Activated T-helper 2 cell treated with anti-CD3 and anti-CD28 coated beads, Interferon-gamma antibody, Interleukin-2, Interleukin-4, amounts not matched to agents 10 μg/mL and 5 μg/mL and 100 μg/mL, durations not matched to agents 14 hours and 24 hours and 36 hours (primary cell): ENCODE measurements at regions of chr3 and their contacts with region 1.

Region 1: DNA sequence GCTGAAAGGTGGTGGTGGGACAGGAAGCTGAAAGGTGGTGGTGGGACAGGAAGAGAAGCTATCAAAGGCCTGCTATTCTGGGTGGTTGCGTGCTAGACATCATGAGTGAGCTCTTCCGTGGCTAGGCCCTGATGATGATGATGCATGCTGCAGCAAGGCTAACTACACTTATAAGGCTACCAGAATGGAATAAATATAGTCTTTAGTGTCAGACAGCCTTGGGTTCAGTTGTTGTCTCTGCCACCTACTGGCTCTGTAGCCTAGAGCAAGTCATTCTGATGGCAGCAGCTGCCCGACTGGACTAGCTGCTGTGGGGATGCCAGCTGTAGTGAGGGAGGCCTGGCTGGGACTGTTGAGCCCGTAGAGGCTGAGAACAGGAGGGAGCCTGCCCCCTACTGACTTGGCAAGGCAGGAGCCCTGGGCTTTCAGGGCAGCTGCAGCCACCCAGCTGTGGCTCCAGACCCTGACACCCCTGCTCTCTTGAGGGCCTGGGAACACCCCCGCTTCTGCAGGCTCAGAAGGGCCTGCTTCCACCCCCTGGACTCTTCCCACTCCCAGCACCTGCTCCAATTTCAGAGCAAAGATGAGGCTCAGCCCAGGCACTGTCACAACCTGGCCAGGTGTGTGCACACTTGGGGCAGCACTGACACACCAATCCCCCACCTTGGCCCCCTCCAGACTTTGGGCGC is 21.4 kb upstream of the ZBED2 start:
- DNase-seq: peak; percentile 51
- H3K4me3 Mint-ChIP-seq: peak overlapping the region; percentile 27
- H3K27ac Mint-ChIP-seq: peak overlapping the region; percentile 92
- H3K4me1 Mint-ChIP-seq: peaks cover 74% of the 10 kb centered on the region
- H3K27me3 Mint-ChIP-seq: no peaks in the 10 kb centered on the region

Region 2: DNA sequence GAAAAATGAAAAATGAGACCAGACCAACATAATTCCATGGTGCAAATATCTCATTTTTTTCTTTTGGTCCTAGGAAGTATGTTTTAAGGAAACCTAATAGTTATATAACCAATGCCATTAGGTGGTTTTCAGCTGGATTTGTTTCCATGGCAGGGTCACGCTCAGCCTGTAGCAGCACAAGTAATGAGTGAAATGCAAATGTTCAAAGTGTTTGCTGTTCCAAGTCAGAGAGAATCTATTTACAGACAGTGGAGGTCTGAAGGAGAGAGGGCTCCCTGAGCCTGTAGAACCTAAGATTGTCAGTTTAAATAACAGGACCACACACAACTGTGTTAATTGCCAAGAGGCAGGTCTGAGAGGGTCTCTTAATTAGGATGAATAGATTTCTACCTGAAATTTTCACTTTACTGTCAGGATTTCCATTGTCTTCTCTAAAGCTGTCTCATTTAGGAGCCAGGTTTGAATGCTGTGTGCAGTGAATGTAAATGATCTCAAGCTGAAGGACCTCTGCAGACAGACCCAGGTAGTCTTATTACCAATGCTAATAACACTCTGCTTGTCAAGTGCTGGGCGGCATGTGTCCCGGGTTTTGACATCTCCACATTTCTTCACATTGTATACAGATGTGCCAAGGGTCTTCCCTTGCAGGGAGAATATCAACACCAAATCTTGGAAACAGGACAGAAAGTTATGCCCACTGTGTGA is 862.2 kb before region 1 on chr3:
- intact Hi-C with region 1: no loop called
- DNase-seq: no peak
- H3K4me3 Mint-ChIP-seq: no peak overlapping the region
- H3K27ac Mint-ChIP-seq: no peak overlapping the region
- H3K4me1 Mint-ChIP-seq: no peaks in the 10 kb centered on the region
- H3K27me3 Mint-ChIP-seq: peaks cover 5% of the 10 kb centered on the region

Region 3: GRCh38 chr3:110814170-110815007 is 802.2 kb before region 1 on chr3:
- intact Hi-C with region 1: loop called (anchors 2 kb)
- DNase-seq: peak; percentile 35
- H3K4me3 Mint-ChIP-seq: peak overlapping the region; percentile 43
- H3K27ac Mint-ChIP-seq: peak overlapping the region; percentile 91
- H3K4me1 Mint-ChIP-seq: peaks cover 29% of the 10 kb centered on the region
- H3K27me3 Mint-ChIP-seq: peaks cover 26% of the 10 kb centered on the region

Region 4: GRCh38 chr3:111539351-111540331 is 76.9 kb before region 1 on chr3:
- intact Hi-C with region 1: loop called (anchors 1 kb)
- DNase-seq: peak; percentile 36
- H3K4me3 Mint-ChIP-seq: peak overlapping the region; percentile 69
- H3K27ac Mint-ChIP-seq: peak overlapping the region; percentile 85
- H3K4me1 Mint-ChIP-seq: peaks cover 66% of the 10 kb centered on the region
- H3K27me3 Mint-ChIP-seq: no peaks in the 10 kb centered on the region

Region 5: DNA sequence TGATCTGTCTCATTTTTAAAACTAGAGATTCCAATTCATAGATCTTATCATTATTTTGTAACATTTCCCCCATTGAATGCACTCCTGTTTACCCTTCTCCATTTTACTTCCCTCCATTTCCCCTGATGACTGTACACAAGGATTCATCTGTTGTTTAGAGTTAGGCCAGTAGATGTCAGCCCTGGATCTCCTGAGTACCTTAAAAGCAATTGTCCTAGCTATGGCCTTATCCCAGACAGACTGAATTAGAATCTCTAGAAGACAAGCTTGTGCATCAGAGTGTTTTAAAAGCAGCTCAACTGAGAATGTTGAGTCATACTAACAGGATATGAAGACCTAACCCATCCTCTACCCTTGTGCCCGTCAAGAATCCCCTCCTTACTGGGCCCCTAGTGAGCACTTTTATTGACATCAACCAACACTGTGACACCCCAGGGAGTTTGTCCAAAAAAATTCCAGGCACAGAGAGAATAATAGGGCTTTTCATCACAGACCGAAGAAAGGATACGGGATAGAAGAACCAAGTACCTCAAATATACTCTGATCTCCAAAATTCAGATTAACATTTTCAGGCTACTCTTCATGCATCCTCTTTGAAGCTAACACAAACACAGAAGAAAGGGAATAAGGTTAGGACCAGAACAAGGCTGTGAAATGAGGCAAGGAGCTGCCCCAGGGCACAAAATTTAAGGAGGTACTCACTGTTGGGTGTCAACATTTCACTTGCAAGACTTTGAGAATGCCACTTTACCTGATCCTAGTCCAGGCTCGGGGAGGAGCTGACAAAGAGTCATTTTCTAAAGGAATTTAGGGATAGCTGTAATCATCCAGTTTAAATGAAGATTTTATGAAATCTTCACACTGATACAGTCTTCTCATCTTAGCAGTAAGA is 38.5 kb before region 1 on chr3:
- intact Hi-C with region 1: loop called (anchors 1 kb)
- DNase-seq: no peak
- H3K4me3 Mint-ChIP-seq: no peak overlapping the region
- H3K27ac Mint-ChIP-seq: peak overlapping the region; percentile 46
- H3K4me1 Mint-ChIP-seq: peaks cover 65% of the 10 kb centered on the region
- H3K27me3 Mint-ChIP-seq: no peaks in the 10 kb centered on the region

Region 6: DNA sequence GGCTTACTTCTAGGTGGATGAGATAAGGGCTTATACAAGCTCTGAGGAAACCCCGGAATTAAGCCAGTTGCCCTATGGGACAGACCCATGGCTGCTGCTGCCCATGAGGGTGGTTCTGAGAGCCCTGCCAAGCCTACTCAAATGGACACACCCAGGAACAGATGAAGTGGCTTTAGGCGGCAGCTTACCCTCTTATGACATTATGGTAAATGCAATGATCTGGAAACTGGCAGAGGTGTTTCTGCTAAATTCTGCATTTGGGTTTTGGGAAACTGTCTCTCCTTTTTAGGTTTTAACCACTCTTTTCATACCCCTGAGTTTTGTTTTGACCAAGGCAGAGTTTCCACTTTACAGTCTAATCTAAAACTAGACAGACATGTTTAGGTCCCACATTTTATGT is 12.4 kb before region 1 on chr3:
- intact Hi-C with region 1: loop called (anchors 1 kb)
- DNase-seq: no peak
- H3K4me3 Mint-ChIP-seq: peak overlapping the region; percentile 22
- H3K27ac Mint-ChIP-seq: peak overlapping the region; percentile 85
- H3K4me1 Mint-ChIP-seq: peaks cover 81% of the 10 kb centered on the region
- H3K27me3 Mint-ChIP-seq: no peaks in the 10 kb centered on the region